Aorta (tissue), 5 donors: ENCODE measurements at regions of chr6 and their contacts with region 1.

Region 1: GRCh38 chr6:41430875-41431274 is 95.5 kb downstream of the NCR2 start:
- DNase-seq: peak in 1 of 2 donors; percentile 54
- ATAC-seq: no peak
- H3K4me3 ChIP-seq: no peak overlapping the region
- H3K27ac ChIP-seq: peak overlapping the region in 1 of 2 donors; percentile 20
- H3K4me1 ChIP-seq: no peaks in the 10 kb centered on the region
- H3K27me3 ChIP-seq: no peaks in the 10 kb centered on the region

Region 2: GRCh38 chr6:41286544-41287346 is 144.1 kb before region 1 on chr6 and contains the start of gene TREM1:
- intact Hi-C with region 1: no loop called
- DNase-seq: peak in 1 of 2 donors; percentile 76
- ATAC-seq: peak; percentile 59
- H3K4me3 ChIP-seq: no peak within 1 kb of the TSS
- H3K27ac ChIP-seq: no peak within 1 kb of the TSS
- H3K4me1 ChIP-seq: no peaks in the 10 kb centered on the region
- H3K27me3 ChIP-seq: peaks cover 0 to 2% of the 10 kb centered on the region in 2 donors
- total RNA-seq, gene TREM1: 6.2 to 18.4 TPM

Region 3: DNA sequence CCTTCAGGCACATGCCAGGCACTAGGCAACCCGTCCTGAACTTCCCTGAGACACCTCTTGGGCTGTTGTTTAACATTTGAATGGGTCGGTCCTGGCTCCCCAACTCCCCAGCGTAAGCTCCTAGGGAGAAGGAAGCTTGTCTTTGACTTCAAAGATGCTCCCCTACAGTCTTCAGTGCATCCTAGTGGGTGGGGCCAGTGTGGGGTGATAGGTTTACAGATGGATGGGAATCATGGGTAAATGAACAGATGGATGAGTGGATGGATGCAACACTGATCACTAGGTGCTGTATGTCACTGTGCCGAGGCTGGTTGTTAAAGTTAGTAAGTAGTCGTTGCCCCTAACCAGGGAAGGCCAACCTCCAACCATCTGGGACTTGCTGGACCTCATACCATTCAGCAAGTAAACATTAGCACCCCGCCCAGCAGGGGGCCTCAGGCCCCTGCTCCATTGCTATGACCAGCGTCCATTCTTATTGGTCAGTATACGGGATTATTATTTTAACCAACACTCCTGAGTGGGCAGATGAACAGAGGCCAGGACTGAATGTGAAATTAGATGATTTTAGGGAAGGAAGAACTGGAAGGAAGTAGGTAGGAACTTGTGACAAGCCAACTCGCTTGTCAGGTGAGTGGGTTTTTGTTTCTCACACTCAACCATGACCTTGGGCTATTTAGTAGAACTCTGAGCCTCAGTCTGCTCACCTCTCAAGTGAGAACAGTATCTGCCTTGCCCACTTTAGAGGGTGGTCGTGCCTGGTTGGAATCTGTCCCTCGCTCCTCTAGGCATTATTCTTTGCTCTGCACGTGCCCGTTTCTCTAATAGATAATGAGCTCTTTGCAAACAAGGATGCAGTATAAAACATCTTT is 32.4 kb after region 1 on chr6:
- intact Hi-C with region 1: loop called in 1 of 2 experiments (anchors 5 kb)
- DNase-seq: peak; percentile 79 to 91
- ATAC-seq: peak; percentile 80
- H3K4me3 ChIP-seq: no peak overlapping the region
- H3K27ac ChIP-seq: no peak overlapping the region
- H3K4me1 ChIP-seq: no peaks in the 10 kb centered on the region
- H3K27me3 ChIP-seq: no peaks in the 10 kb centered on the region